ENCODE measurements at regions of chr3 and their contacts with region 1.

Region 1: GRCh38 chr3:15815696-15816095 is 17.9 kb upstream of the ANKRD28 start:
- DNase-seq: peak; percentile 49
- ATAC-seq: peak; percentile 67; the same call in 1 of the 2 replicates
- H3K4me3 ChIP-seq: no peak overlapping the region
- H3K27ac ChIP-seq: no peak overlapping the region
- H3K4me1 ChIP-seq: peaks cover 2 to 3% of the 10 kb centered on the region in 2 experiments; a peak in 1 of 4 replicates
- H3K27me3 ChIP-seq: no peaks in the 10 kb centered on the region
- CTCF ChIP-seq: peak in 2 of 3 experiments; percentile 49 to 50; a peak in 2 of 6 replicates
- POLR2A ChIP-seq: no peak
- RAD21 ChIP-seq: peak; percentile 71

Region 2: GRCh38 chr3:15108082-15108545 is 707.6 kb before region 1 on chr3:
- CTCF ChIA-PET with region 1: no interaction called
- POLR2A ChIA-PET with region 1: no interaction called
- RAD21 ChIA-PET with region 1: no interaction called
- intact Hi-C with region 1: loop called (anchors 5 kb)
- DNase-seq: peak; percentile 65
- ATAC-seq: peak; percentile 98
- H3K4me3 ChIP-seq: no peak overlapping the region
- H3K27ac ChIP-seq: no peak overlapping the region
- H3K4me1 ChIP-seq: peaks cover 0 to 5% of the 10 kb centered on the region in 2 experiments; a peak in 1 of 4 replicates
- H3K27me3 ChIP-seq: no peaks in the 10 kb centered on the region
- CTCF ChIP-seq: peak; percentile 67 to 97 (median 95)
- POLR2A ChIP-seq: no peak
- RAD21 ChIP-seq: peak; percentile 90

Region 3: GRCh38 chr3:15629860-15630597 is 185.7 kb before region 1 on chr3:
- CTCF ChIA-PET with region 1: interaction called, 27 read pairs
- POLR2A ChIA-PET with region 1: interaction called, 3 read pairs
- RAD21 ChIA-PET with region 1: interaction called, 4 to 14 read pairs
- intact Hi-C with region 1: loop called (anchors 1 kb)
- DNase-seq: peak; percentile 70
- ATAC-seq: peak; percentile 94
- H3K4me3 ChIP-seq: peak overlapping the region; percentile 27 to 29
- H3K27ac ChIP-seq: peak overlapping the region; percentile 2; the same call in 1 of the 2 replicates
- H3K4me1 ChIP-seq: peaks cover 21 to 45% of the 10 kb centered on the region in 2 experiments
- H3K27me3 ChIP-seq: no peaks in the 10 kb centered on the region
- CTCF ChIP-seq: peak; percentile 63 to 83 (median 77)
- POLR2A ChIP-seq: no peak
- RAD21 ChIP-seq: peak; percentile 90

Region 4: DNA sequence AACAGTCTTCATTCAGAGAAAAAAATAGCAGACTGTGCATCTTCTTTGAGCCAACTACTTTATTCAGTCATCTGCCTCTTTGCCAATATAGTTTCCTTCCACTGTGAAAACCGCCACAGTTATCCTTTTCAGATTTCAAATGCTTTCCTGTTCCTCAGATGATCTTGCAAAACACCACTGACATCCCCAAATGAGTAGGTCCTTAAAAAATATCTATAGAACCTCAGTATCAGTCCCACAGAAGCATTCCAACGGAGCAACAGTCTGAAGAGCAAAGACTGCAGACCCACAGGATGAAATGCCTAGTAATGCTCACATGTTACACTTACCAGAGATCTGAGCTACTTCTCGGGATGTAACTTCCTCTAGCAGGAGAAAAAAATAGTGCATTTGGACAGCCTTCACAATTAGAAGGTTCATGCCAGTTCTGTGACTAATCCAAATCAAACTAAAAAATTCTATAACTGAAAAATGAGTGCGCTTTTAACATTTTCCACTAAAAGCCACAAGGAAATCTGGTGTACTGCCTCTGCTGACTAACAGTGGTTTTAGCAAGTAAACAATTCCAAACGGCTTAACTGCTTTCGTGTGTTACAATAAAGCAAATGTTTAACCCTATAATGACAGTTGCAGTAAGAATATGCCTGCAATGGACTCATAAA is 17.9 kb before region 1 on chr3 and contains the start of gene ANKRD28:
- CTCF ChIA-PET with region 1: interaction called, 10 read pairs
- POLR2A ChIA-PET with region 1: interaction called, 3 read pairs
- RAD21 ChIA-PET with region 1: no interaction called
- intact Hi-C with region 1: no loop called
- DNase-seq: peak; percentile 86
- ATAC-seq: peak; percentile 77
- H3K4me3 ChIP-seq: peak within 1 kb of the TSS; percentile 21 to 43
- H3K27ac ChIP-seq: peak within 1 kb of the TSS; percentile 92
- H3K4me1 ChIP-seq: peaks cover 58 to 68% of the 10 kb centered on the region in 2 experiments
- H3K27me3 ChIP-seq: no peaks in the 10 kb centered on the region
- CTCF ChIP-seq: no peak; a peak in 1 of 6 replicates
- POLR2A ChIP-seq: no peak
- RAD21 ChIP-seq: peak; percentile 15; the same call in 1 of the 2 replicates
- total RNA-seq, gene ANKRD28: 47.5 TPM

Region 5: GRCh38 chr3:16177962-16178627 is 362.4 kb after region 1 on chr3:
- CTCF ChIA-PET with region 1: interaction called, 4 read pairs
- POLR2A ChIA-PET with region 1: no interaction called
- RAD21 ChIA-PET with region 1: no interaction called
- intact Hi-C with region 1: loop called (anchors 2 kb)
- DNase-seq: peak; percentile 38
- ATAC-seq: peak; percentile 97
- H3K4me3 ChIP-seq: no peak overlapping the region
- H3K27ac ChIP-seq: no peak overlapping the region
- H3K4me1 ChIP-seq: peaks cover 0 to 9% of the 10 kb centered on the region in 2 experiments; a peak in 1 of 4 replicates
- H3K27me3 ChIP-seq: no peaks in the 10 kb centered on the region
- CTCF ChIP-seq: peak; percentile 88 to 98 (median 96)
- POLR2A ChIP-seq: no peak
- RAD21 ChIP-seq: peak; percentile 98

Region 6: GRCh38 chr3:16247276-16248061 is 431.8 kb after region 1 on chr3:
- CTCF ChIA-PET with region 1: no interaction called
- POLR2A ChIA-PET with region 1: no interaction called
- RAD21 ChIA-PET with region 1: no interaction called
- intact Hi-C with region 1: loop called (anchors 1 kb)
- DNase-seq: peak; percentile 66
- ATAC-seq: peak; percentile 88
- H3K4me3 ChIP-seq: no peak overlapping the region
- H3K27ac ChIP-seq: no peak overlapping the region
- H3K4me1 ChIP-seq: peaks cover 0 to 15% of the 10 kb centered on the region in 2 experiments; a peak in 1 of 4 replicates
- H3K27me3 ChIP-seq: no peaks in the 10 kb centered on the region
- CTCF ChIP-seq: peak; percentile 82 to 97 (median 93)
- POLR2A ChIP-seq: no peak
- RAD21 ChIP-seq: peak; percentile 97